ENCODE measurements at regions of chr1 and their contacts with region 1.

Region 1: GRCh38 chr1:203340112-203340804 is 10.7 kb downstream of the FMOD start:
- DNase-seq: peak; percentile 79
- ATAC-seq: peak; percentile 81

Region 2: GRCh38 chr1:203273206-203273868 is 66.9 kb before region 1 on chr1:
- intact Hi-C with region 1: loop called (anchors 2 kb)
- DNase-seq: peak; percentile 93
- ATAC-seq: peak; percentile 76

Region 3: DNA sequence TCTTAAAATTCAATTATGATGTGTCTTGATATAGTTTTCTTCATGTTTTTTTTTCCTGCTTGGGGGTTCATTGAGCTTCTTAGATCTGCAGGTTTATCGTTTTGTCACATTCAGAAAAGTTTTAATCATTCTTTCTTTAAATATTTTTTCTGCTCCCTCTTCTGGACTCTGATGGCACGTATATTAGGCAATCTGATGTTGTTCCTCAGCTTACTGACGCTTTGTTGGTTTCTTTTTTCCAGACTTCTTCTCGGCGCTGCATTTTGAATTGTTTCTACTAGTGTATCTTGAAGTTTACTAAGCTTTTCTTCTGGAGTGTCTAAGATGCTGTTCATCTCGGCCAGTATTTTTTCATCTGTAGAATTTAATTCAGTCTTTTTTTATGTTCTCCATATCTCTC is 55.5 kb after region 1 on chr1:
- intact Hi-C with region 1: no loop called
- DNase-seq: no peak
- ATAC-seq: no peak

Region 4: GRCh38 chr1:203440771-203441170 is 100.5 kb after region 1 on chr1:
- intact Hi-C with region 1: loop called (anchors 2 kb)
- DNase-seq: peak; percentile 85
- ATAC-seq: peak; percentile 95

Region 5: GRCh38 chr1:203486618-203487370 is 146.5 kb after region 1 on chr1:
- intact Hi-C with region 1: loop called (anchors 2 kb)
- DNase-seq: no peak
- ATAC-seq: peak; percentile 26